A673 (cell line): ENCODE measurements at regions of chr11 and their contacts with region 1.

Region 1: GRCh38 chr11:6473481-6474422 is at the start of gene TRIM3:
- DNase-seq: peak; percentile 88
- H3K4me3 ChIP-seq: peak within 1 kb of the TSS; percentile 82
- H3K27ac ChIP-seq: peak within 1 kb of the TSS; percentile 86
- H3K4me1 ChIP-seq: peaks cover 25% of the 10 kb centered on the region
- H3K27me3 ChIP-seq: no peaks in the 10 kb centered on the region
- CTCF ChIP-seq: peak; percentile 46
- total RNA-seq, gene TRIM3: 34.2 and 37.1 TPM in 2 replicates

Region 2: GRCh38 chr11:5983443-5983842 is 490.3 kb before region 1 on chr11:
- CTCF ChIA-PET with region 1: no interaction called
- POLR2A ChIA-PET with region 1: no interaction called
- intact Hi-C with region 1: no loop called
- DNase-seq: no peak
- H3K4me3 ChIP-seq: no peak overlapping the region
- H3K27ac ChIP-seq: no peak overlapping the region
- H3K4me1 ChIP-seq: no peaks in the 10 kb centered on the region
- H3K27me3 ChIP-seq: no peaks in the 10 kb centered on the region
- CTCF ChIP-seq: no peak

Region 3: GRCh38 chr11:6234387-6235107 is 239.2 kb before region 1 on chr11 and contains the start of gene FHIP1B:
- CTCF ChIA-PET with region 1: no interaction called
- POLR2A ChIA-PET with region 1: no interaction called
- intact Hi-C with region 1: loop called (anchors 10 kb)
- DNase-seq: peak; percentile 99
- H3K4me3 ChIP-seq: peak within 1 kb of the TSS; percentile 96
- H3K27ac ChIP-seq: peak within 1 kb of the TSS; percentile 73
- H3K4me1 ChIP-seq: no peaks in the 10 kb centered on the region
- H3K27me3 ChIP-seq: no peaks in the 10 kb centered on the region
- CTCF ChIP-seq: no peak
- total RNA-seq, gene FHIP1B: 18.6 and 23.3 TPM in 2 replicates